ENCODE measurements at regions of chr18 and their contacts with region 1.

Region 1: DNA sequence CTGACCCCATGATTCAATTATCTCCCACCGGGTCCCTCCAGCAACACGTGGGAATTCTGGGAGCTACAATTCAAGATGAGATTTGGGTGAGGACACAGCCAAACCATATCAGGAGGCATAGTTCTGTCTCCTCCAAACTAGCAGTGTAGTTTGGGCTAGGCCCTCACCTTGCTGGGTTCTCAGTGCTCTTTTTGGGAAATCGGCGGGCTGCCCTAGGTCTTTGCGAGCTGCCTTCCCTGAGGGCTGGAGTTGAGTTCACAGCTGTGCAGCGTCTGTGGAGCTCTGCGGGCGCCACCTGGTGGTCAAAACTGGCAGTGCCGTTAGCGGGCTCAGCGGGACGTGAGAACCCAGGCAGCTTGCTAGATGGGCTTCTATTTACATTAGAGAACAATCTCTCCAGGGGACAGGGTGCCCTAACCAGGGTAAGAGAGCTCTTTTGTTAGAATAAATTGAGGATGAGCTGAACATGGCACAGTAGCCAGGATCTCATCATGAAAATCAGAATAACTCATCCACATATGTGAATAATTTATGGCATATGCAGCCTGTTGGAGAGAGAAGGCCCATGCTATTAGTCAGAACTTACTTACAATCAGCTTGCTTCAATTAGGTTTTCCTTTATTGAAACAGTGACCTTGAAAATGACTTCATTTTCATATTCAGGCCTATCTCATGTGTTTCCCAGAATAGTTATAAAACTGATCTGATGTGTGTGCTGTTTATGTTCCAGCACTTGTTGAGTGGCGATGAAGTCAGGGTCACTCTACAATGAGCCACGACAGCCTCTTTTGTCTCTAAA is 27.4 kb upstream of the YES1 start:
- DNase-seq: peak; percentile 49 to 92 (median 84)
- H3K4me3 ChIP-seq: peak overlapping the region in 2 of 59 donors; percentile 6 to 21
- H3K27ac ChIP-seq: no peak overlapping the region
- H3K27me3 ChIP-seq: no peaks in the 10 kb centered on the region
- CTCF ChIP-seq: peak; percentile 80 to 99 (median 95)

Region 2: DNA sequence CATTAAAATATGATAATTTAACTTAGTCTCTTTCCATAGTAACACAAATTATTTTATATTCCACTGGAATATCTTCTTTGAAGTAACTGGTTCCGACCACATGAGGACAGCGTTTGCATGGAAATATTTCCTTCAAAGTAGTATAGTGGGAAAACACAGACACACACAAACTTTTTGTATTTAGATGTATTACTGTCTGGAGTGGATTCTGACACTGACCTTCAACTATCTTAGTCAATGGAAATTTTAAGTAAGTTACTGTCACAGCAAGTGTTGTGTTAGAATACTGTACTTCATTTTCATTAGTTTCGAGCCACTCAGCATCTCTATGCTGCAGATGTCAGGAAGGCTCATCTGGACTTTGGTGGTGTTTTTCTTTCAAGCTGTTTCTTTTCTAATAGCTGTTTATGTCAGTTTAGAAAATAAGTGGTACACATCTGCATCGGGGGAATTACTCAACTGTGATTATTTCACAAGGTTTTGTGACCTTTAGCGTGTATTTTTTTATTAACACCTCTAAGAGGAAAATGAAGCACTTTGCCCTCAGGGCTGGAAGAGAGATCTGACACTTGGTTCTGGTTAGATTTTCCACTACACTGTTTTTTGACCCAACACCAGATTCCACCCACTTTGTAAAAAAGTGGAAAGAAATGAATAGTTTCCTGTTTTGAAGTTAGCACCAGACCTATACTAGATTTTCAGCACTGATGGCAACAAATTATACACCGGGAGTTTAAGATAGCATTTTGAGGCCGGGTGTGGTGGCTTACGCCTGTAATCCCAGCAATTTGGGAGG is 552.7 kb before region 1 on chr18:
- intact Hi-C with region 1: loop called (anchors 10 kb)
- DNase-seq: peak in 1 of 10 donors; percentile 21
- H3K4me3 ChIP-seq: no peak overlapping the region
- H3K27ac ChIP-seq: no peak overlapping the region
- H3K27me3 ChIP-seq: no peaks in the 10 kb centered on the region
- CTCF ChIP-seq: peak in 55 of 56 donors; percentile 37 to 81 (median 59)

Region 3: DNA sequence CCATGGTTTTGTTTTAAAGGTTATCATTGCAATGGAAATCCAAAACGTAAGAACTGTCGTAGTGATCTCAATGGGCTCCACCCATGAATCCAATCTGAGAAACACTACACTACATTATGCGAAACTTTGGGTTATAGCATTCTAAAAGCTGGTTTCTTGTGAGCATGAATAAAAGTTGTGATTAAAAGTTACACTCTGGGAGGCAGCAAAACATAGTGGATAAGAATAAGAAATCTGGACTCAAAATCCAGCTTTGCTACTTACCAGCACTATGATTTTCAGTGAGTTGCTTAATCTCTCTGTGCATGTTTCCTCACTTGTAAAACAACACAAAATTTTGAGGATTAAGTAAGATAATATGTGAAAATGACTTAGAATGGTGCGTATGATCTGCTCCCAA is 545.9 kb before region 1 on chr18:
- intact Hi-C with region 1: loop called (anchors 10 kb)
- DNase-seq: no peak
- H3K4me3 ChIP-seq: no peak overlapping the region
- H3K27ac ChIP-seq: no peak overlapping the region
- H3K27me3 ChIP-seq: no peaks in the 10 kb centered on the region
- CTCF ChIP-seq: peak in 24 of 56 donors; percentile 7 to 59 (median 26)

Region 4: DNA sequence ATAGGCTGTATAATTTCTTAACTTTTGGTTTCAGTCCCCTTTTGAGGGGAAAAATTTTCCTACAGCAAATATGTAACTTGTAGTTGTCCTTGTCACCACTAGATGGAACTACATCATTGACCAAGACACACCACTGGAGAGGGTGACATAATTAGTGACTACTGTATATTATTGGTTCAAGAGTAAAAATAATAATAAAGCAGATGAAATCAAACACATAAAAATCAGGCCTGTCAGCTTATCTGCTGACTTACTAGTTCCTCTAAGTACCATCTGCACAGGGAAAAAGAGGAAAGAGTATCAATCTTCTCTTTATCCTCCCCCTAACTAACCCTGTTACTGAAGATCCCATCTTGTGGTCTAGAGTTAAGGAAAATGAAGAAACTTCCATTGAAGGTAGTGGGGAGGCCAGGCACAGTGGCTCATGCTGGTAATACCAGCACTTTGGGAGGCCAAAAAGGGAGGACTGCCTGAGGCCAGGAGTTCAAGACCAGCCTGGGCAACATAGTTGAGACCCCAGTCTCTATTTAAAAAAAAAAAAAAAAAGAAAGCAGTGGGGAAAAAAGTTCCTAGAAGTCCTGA is 97.4 kb before region 1 on chr18:
- intact Hi-C with region 1: loop called in 1 of 2 experiments (anchors 2 kb)
- DNase-seq: no peak
- H3K4me3 ChIP-seq: no peak overlapping the region
- H3K27ac ChIP-seq: no peak overlapping the region
- H3K27me3 ChIP-seq: peaks cover 0 to 4% (median 0%) of the 10 kb centered on the region in 45 donors
- CTCF ChIP-seq: peak; percentile 70 to 96 (median 82)

Measured in dorsolateral prefrontal cortex (tissue), 120 donors.